Ascending aorta (tissue), 2 donors: ENCODE measurements at regions of chr6 and their contacts with region 1.

Region 1: DNA sequence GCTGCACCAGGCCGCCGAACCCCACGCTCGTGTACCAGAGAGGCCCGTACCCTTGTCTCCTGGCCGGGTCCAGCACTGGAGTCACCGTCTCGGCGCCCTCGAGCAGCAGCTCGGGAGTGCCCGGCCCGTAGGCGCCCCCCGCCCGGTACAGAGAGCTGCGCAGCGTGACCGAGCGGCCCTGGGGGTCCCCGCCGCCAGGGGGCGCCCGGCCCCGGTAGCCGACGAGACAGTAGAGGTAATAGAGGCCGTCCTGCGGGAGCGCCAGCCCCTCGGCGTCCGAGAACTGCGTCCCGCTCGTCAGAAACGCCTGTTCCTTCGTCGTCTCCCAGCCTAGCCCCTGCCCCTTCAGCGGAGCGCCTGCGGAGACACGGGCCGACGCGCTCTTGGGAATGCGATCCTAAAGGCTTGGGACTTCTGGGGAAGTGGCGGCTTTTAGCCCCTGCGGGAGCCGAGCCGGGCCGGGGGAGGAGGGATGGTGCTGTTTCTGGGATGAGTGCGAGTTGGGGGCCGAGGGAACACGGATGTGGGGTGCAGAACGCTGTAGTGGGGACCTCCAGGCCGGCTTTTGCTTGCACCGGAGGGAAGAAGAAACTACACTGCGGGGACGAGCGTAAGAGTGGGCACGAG is 1.3 kb downstream of the LTB start:
- DNase-seq: peak in 1 of 2 donors; percentile 93
- H3K4me3 ChIP-seq: peak overlapping the region; percentile 69 to 86
- H3K27ac ChIP-seq: peak overlapping the region; percentile 58 to 75
- H3K4me1 ChIP-seq: peaks cover 0 to 12% of the 10 kb centered on the region in 2 donors
- H3K27me3 ChIP-seq: no peaks in the 10 kb centered on the region
- CTCF ChIP-seq: peak; percentile 96 to 99 (median 96)

Region 2: GRCh38 chr6:31597006-31597405 is 16.1 kb after region 1 on chr6:
- intact Hi-C with region 1: loop called (anchors 1 kb)
- DNase-seq: no peak
- H3K4me3 ChIP-seq: no peak overlapping the region
- H3K27ac ChIP-seq: no peak overlapping the region
- H3K4me1 ChIP-seq: no peaks in the 10 kb centered on the region
- H3K27me3 ChIP-seq: no peaks in the 10 kb centered on the region
- CTCF ChIP-seq: peak in 1 of 3 experiments; percentile 21

Region 3: DNA sequence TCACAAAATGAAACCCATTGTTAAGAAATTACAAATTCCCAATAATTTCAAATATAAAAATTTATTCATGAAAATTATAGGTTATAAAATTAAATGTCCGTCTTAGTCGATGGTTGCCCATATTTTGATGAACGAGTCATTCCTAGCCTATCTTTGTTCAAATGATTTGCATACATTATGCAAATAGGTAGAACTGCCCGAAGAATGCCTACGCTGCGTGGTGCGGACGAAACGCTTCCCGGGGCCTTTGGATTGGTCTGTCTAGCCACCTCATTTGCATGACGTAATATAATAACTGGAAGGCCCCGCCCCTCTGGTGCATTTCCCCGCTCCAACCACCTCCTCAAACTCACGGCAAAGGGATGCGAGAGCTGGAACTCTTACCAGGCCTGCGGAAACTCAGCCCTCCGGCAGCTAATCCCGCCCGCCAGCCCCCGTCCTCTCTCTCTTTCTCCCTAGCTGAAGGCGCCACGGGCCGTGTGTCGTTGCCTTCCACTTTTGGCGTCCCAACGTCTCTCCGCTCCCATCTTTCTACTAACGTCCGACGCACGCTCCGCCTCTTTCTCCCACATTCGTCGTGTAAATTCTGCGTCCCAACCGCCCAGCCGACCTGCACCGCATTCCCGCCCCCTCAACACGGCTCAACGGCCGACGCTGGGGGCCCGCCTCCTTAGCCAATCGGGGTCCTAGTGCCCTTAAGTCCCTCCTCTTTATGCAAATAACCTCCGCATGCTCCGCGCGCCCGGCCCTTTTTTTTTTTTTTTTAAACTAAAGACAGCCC is 39.1 kb after region 1 on chr6:
- intact Hi-C with region 1: loop called (anchors 2 kb)
- DNase-seq: peak; percentile 97 to 99
- H3K4me3 ChIP-seq: peak overlapping the region; percentile 76 to 93
- H3K27ac ChIP-seq: peak overlapping the region; percentile 98 to 99
- H3K4me1 ChIP-seq: peaks cover 8 to 9% of the 10 kb centered on the region in 2 donors
- H3K27me3 ChIP-seq: no peaks in the 10 kb centered on the region
- CTCF ChIP-seq: no peak